ENCODE measurements at regions of chr11 and their contacts with region 1.

Region 1: GRCh38 chr11:44621140-44621681 is 55.7 kb downstream of the CD82 start:
- DNase-seq: peak; percentile 55
- ATAC-seq: peak; percentile 86
- H3K4me3 ChIP-seq: 0 out of 6 replicates have a peak overlapping the region, but pooled peaks of 1 of the 3 experiments have one; percentile 24
- H3K27ac ChIP-seq: no peak overlapping the region
- H3K4me1 ChIP-seq: no peaks in the 10 kb centered on the region
- H3K27me3 ChIP-seq: no peaks in the 10 kb centered on the region; a peak in 1 of 5 replicates
- CTCF ChIP-seq: peak; percentile 95
- EP300 ChIP-seq: no peak
- POLR2A ChIP-seq: no peak
- RAD21 ChIP-seq: peak; percentile 91

Region 2: DNA sequence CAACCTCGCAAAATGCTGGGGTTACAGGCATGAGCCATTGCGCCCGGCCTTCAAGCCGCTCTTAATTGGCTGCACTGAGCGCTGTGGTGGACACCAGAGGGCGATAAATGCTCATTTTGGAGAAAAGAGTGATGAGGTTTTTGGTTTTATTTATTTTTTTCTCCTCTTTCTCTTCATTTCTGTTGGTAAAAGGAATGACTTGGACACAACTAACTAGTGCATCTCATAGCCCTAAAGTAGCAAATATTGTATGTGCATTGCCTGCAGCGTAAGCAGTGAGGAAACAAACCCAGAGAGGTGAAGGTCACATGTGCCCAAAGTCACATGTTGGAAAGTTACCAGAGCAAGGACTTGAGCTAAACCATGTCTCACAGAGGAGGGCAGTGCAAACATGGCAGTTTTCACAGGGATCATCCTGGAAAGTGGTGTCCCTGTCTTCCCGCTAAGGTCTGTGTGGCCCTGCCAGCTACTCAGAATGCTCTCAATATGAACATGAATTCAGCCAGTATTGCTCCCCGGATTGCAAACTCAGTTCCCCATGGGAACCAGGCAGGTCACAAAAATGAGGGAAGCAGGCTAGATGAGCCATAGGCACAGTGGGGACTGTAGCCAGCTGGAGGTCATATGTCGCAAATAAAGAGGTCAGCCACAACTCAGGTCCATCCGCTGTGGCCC is 64.3 kb before region 1 on chr11:
- CTCF ChIA-PET with region 1: interaction called, 44 read pairs
- POLR2A ChIA-PET with region 1: no interaction called
- in situ Hi-C with region 1: loop called (anchors 10 kb)
- intact Hi-C with region 1: loop called (anchors 1 kb)
- DNase-seq: peak; percentile 41
- ATAC-seq: peak; percentile 85
- H3K4me3 ChIP-seq: no peak overlapping the region
- H3K27ac ChIP-seq: no peak overlapping the region
- H3K4me1 ChIP-seq: peaks cover 11% of the 10 kb centered on the region
- H3K27me3 ChIP-seq: no peaks in the 10 kb centered on the region; a peak in 1 of 5 replicates
- CTCF ChIP-seq: peak; percentile 74
- EP300 ChIP-seq: no peak
- POLR2A ChIP-seq: no peak
- RAD21 ChIP-seq: peak; percentile 55; the same call in 1 of the 2 replicates

Region 3: GRCh38 chr11:44680982-44681597 is 59.9 kb after region 1 on chr11:
- CTCF ChIA-PET with region 1: no interaction called
- POLR2A ChIA-PET with region 1: no interaction called
- in situ Hi-C with region 1: no loop called
- intact Hi-C with region 1: no loop called
- DNase-seq: no peak
- ATAC-seq: no peak
- H3K4me3 ChIP-seq: no peak overlapping the region
- H3K27ac ChIP-seq: no peak overlapping the region
- H3K4me1 ChIP-seq: no peaks in the 10 kb centered on the region
- H3K27me3 ChIP-seq: no peaks in the 10 kb centered on the region
- CTCF ChIP-seq: no peak
- EP300 ChIP-seq: no peak
- POLR2A ChIP-seq: no peak
- RAD21 ChIP-seq: no peak

Region 4: GRCh38 chr11:44760917-44761550 is 139.8 kb after region 1 on chr11:
- CTCF ChIA-PET with region 1: no interaction called
- POLR2A ChIA-PET with region 1: no interaction called
- in situ Hi-C with region 1: loop called (anchors 10 kb)
- intact Hi-C with region 1: no loop called
- DNase-seq: no peak
- ATAC-seq: peak; percentile 53; the same call in 2 of the 3 replicates
- H3K4me3 ChIP-seq: no peak overlapping the region
- H3K27ac ChIP-seq: no peak overlapping the region
- H3K4me1 ChIP-seq: no peaks in the 10 kb centered on the region
- H3K27me3 ChIP-seq: peaks cover 0 to 7% of the 10 kb centered on the region in 2 experiments; a peak in 2 of 5 replicates
- CTCF ChIP-seq: no peak
- EP300 ChIP-seq: no peak
- POLR2A ChIP-seq: no peak
- RAD21 ChIP-seq: no peak

Region 5: DNA sequence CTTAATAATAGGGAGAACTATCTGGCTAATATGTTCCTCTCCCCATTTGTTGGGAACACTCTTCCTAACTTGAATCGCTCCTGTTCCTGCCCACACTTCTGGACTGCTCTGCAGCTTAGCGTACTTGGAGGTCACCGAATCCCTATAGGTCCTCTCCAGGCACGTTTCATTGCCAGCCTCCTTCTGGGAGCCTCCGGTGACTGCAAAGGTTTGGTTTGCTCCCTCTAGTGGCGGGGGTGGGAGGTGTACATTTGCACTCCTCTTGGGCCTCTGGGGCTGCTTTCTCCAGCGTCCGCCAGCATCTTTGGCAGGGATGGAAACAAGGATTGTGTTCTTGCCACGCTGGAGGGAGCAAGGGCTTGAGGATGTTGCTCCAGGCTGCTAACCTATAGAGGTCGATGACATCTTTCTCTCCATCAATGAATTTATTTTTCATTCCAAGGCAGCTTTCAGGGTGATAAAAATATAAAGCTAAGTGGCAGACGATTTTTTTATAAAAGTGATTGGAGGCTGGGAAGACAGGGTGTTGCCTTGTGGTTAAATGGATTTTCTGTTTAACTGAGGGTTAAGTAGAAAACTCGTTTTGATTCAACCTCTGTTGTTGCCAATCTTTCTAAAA is 154.3 kb after region 1 on chr11:
- CTCF ChIA-PET with region 1: interaction called, 4 read pairs
- POLR2A ChIA-PET with region 1: no interaction called
- in situ Hi-C with region 1: no loop called
- intact Hi-C with region 1: loop called (anchors 5 kb)
- DNase-seq: peak; percentile 39
- ATAC-seq: peak; percentile 93
- H3K4me3 ChIP-seq: no peak overlapping the region
- H3K27ac ChIP-seq: no peak overlapping the region
- H3K4me1 ChIP-seq: no peaks in the 10 kb centered on the region
- H3K27me3 ChIP-seq: no peaks in the 10 kb centered on the region
- CTCF ChIP-seq: peak; percentile 60
- EP300 ChIP-seq: no peak
- POLR2A ChIP-seq: no peak
- RAD21 ChIP-seq: no peak

Region 6: GRCh38 chr11:44893846-44894617 is 272.8 kb after region 1 on chr11:
- CTCF ChIA-PET with region 1: interaction called, 7 read pairs
- POLR2A ChIA-PET with region 1: no interaction called
- in situ Hi-C with region 1: no loop called
- intact Hi-C with region 1: loop called (anchors 1 kb)
- DNase-seq: peak; percentile 24
- ATAC-seq: peak; percentile 96
- H3K4me3 ChIP-seq: no peak overlapping the region
- H3K27ac ChIP-seq: no peak overlapping the region
- H3K4me1 ChIP-seq: no peaks in the 10 kb centered on the region
- H3K27me3 ChIP-seq: peaks cover 0 to 1% of the 10 kb centered on the region in 2 experiments; a peak in 1 of 5 replicates
- CTCF ChIP-seq: peak; percentile 86
- EP300 ChIP-seq: no peak
- POLR2A ChIP-seq: no peak
- RAD21 ChIP-seq: peak; percentile 70; the same call in 1 of the 2 replicates

Region 7: GRCh38 chr11:44911029-44911814 is 290.0 kb after region 1 on chr11:
- CTCF ChIA-PET with region 1: interaction called, 23 read pairs
- POLR2A ChIA-PET with region 1: no interaction called
- in situ Hi-C with region 1: loop called (anchors 5 kb)
- intact Hi-C with region 1: loop called (anchors 1 kb)
- DNase-seq: peak; percentile 61
- ATAC-seq: peak; percentile 86
- H3K4me3 ChIP-seq: no peak overlapping the region
- H3K27ac ChIP-seq: no peak overlapping the region
- H3K4me1 ChIP-seq: no peaks in the 10 kb centered on the region
- H3K27me3 ChIP-seq: peaks cover 0 to 29% of the 10 kb centered on the region in 2 experiments; a peak in 2 of 5 replicates
- CTCF ChIP-seq: peak; percentile 70
- EP300 ChIP-seq: no peak
- POLR2A ChIP-seq: no peak
- RAD21 ChIP-seq: peak; percentile 33; the same call in 1 of the 2 replicates

Measured in HepG2 (cell line).